CD14-positive monocyte (primary cell): ENCODE measurements at regions of chr5 and their contacts with region 1.

Region 1: DNA sequence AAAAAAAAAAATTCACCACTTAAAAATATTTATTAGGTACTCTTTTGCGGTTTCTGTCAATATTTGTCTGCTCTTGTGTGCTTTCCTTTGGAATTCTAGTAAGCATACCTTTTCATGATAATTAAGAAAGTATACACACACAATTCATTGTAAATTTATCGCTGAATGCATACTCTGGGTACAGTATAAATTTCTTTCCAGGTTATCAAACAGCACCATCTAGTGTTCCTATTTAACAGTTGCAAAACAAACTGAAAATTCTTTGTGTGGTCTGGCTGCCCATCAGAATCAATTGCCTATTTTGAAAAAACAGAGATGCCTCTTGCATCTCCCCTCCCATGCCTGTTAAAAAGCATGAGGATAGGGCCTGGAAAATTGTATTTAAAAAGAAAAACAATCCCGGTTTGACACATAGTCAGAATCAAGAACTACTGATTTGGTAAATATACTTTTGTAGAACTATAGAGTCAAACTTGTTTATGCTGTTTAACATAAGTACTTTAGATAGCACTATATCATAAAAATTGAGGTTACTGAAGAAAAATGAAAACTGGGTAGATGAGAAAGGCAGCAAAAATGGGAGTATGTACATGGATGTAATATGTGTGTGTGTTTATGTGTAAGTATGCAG is 16.2 kb downstream of the PGGT1B start:
- DNase-seq: peak; percentile 6 to 55 (median 28)
- H3K4me3 ChIP-seq: no peak overlapping the region
- H3K4me3 Mint-ChIP-seq: no peak overlapping the region
- H3K27ac ChIP-seq: no peak overlapping the region
- H3K27ac Mint-ChIP-seq: no peak overlapping the region
- H3K4me1 ChIP-seq: no peaks in the 10 kb centered on the region
- H3K4me1 Mint-ChIP-seq: peaks cover 15% of the 10 kb centered on the region
- H3K27me3 ChIP-seq: no peaks in the 10 kb centered on the region
- H3K27me3 Mint-ChIP-seq: no peaks in the 10 kb centered on the region
- CTCF ChIP-seq: peak; percentile 80

Region 2: DNA sequence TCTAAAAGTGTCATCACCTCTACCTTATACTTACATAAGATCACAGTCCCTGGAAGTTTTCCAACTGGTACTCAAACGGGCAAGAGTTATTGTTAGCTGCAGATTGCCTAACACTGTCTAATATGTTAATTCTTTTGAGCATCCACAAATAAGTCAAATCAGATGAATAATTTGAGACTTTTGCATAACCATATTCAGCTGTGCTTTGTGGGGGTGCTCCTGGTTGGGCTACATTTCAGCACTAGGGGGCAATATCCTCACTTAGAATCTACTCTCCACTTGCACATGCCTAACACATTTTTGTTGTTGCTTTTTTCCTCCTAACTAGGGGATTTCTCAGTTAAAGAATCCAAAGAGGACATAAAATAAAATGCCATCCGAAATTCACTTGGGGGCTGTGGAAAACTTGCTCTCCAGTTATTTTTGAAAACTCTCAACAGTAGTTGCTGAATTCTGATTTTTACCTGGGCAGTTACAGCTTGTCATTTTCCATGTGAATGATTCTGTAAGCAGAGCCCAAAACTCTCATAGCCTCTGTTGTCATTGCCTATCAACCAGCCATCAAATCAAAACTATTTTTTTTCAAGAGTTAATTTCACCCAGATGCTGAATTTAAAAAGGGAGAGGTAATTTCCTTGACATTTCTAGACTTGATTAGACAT is 148.3 kb before region 1 on chr5:
- intact Hi-C with region 1: loop called (anchors 5 kb)
- DNase-seq: peak; percentile 6 to 39 (median 24)
- H3K4me3 ChIP-seq: no peak overlapping the region
- H3K4me3 Mint-ChIP-seq: no peak overlapping the region
- H3K27ac ChIP-seq: no peak overlapping the region
- H3K27ac Mint-ChIP-seq: no peak overlapping the region
- H3K4me1 ChIP-seq: no peaks in the 10 kb centered on the region
- H3K4me1 Mint-ChIP-seq: no peaks in the 10 kb centered on the region
- H3K27me3 ChIP-seq: peaks cover 0 to 3% of the 10 kb centered on the region in 2 donors
- H3K27me3 Mint-ChIP-seq: peaks cover 7 to 12% (median 9%) of the 10 kb centered on the region in 3 donors
- CTCF ChIP-seq: peak; percentile 73

Region 3: DNA sequence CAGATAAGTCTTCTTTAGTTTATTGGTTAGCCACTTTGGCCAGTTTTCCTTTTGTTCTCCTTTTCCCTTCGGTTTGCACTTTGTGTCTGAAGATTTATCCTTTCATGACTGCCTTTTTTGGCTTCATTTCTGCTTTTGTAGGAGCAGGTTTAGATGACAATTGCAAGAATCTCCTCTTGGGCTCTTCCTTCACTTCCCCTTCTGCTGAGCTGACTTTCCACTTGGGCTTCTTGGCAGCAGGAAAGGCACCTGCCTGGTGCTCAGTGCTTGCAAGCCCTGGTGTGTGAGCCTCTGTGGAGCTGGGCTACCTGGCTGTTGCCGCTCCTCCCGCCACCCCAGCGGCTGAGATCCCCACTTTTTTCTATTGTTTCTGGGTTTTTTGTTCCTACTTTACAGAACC is 42.6 kb after region 1 on chr5:
- intact Hi-C with region 1: no loop called
- DNase-seq: peak; percentile 21 to 37 (median 36)
- H3K4me3 ChIP-seq: no peak overlapping the region
- H3K4me3 Mint-ChIP-seq: peak overlapping the region in 1 of 2 donors; percentile 71
- H3K27ac ChIP-seq: peak overlapping the region; percentile 3 to 11
- H3K27ac Mint-ChIP-seq: peak overlapping the region in 5 of 7 donors; percentile 27 to 81 (median 72)
- H3K4me1 ChIP-seq: peaks cover 17 to 22% of the 10 kb centered on the region in 2 donors
- H3K4me1 Mint-ChIP-seq: peaks cover 32% of the 10 kb centered on the region
- H3K27me3 ChIP-seq: no peaks in the 10 kb centered on the region
- H3K27me3 Mint-ChIP-seq: peaks cover 0 to 1% (median 0%) of the 10 kb centered on the region in 3 donors
- CTCF ChIP-seq: no peak